WTC11 (cell line): ENCODE measurements at regions of chr9 and their contacts with region 1.

Region 1: DNA sequence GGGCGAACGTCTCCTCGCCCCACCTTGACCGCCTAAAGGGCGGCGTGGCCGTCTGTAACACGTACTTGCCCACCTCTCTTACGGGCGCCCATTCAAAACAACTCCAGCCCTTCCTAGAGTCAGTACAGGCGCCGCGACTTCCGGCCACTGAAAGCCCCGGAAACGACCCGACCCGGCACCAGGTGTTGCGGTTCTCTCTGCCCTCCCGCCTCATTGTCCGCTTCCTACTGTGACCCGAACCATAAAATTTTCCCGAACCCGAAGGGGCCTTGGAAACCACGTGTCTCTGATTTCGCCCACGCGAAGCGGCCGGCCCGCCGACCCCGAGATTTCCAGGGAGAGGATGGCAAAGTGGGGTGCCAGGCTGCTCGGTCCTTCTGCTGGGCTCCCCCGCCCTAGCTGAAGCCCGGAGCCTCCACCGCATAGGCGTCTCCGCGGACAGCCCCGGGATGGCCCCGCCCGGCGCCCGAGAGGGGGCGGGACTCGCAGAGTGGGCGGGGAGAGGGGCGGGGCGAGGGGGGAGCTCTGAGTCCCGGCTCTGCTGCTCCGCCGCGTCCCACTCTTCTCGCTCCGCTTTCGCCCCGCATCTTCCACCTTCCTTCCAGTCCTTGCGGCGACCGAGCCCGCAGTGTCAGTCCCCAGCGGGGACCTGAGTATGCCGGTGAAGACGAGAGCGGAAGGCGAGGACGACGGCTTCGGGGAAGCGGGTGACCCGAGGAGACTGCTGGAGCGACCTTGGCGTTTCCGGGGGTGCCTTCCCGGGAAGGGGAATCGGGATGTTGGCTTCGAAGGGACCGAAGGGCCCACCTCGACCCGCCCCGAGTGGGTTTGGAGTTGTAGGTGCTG is 684 bp upstream of the PTGES2 start:
- DNase-seq: peak; percentile 80
- ATAC-seq: peak; percentile 80
- H3K4me3 Mint-ChIP-seq: peak overlapping the region; percentile 94
- H3K27ac Mint-ChIP-seq: peak overlapping the region; percentile 97
- H3K4me1 Mint-ChIP-seq: peaks cover 17% of the 10 kb centered on the region
- H3K27me3 Mint-ChIP-seq: peaks cover 19% of the 10 kb centered on the region
- CTCF ChIP-seq: no peak

Region 2: GRCh38 chr9:127785023-127785932 is 342.9 kb before region 1 on chr9:
- CTCF ChIA-PET with region 1: no interaction called
- POLR2A ChIA-PET with region 1: no interaction called
- DNase-seq: peak; percentile 90
- ATAC-seq: peak; percentile 34
- H3K4me3 Mint-ChIP-seq: peak overlapping the region; percentile 97
- H3K27ac Mint-ChIP-seq: no peak overlapping the region
- H3K4me1 Mint-ChIP-seq: peaks cover 20% of the 10 kb centered on the region
- H3K27me3 Mint-ChIP-seq: no peaks in the 10 kb centered on the region
- CTCF ChIP-seq: peak; percentile 95

Region 3: GRCh38 chr9:128145536-128145935 is 17.3 kb after region 1 on chr9:
- CTCF ChIA-PET with region 1: interaction called, 44 read pairs
- POLR2A ChIA-PET with region 1: no interaction called
- DNase-seq: no peak
- ATAC-seq: no peak
- H3K4me3 Mint-ChIP-seq: no peak overlapping the region
- H3K27ac Mint-ChIP-seq: 0 out of 2 replicates have a peak overlapping the region, but pooled peaks have one; percentile 65
- H3K4me1 Mint-ChIP-seq: peaks cover 6% of the 10 kb centered on the region
- H3K27me3 Mint-ChIP-seq: no peaks in the 10 kb centered on the region
- CTCF ChIP-seq: no peak

Region 4: GRCh38 chr9:128159784-128160602 is 31.8 kb after region 1 on chr9 and contains the start of gene BBLN:
- CTCF ChIA-PET with region 1: interaction called, 30 read pairs
- POLR2A ChIA-PET with region 1: interaction called, 6 read pairs
- DNase-seq: peak; percentile 98
- ATAC-seq: peak; percentile 95
- H3K4me3 Mint-ChIP-seq: peak within 1 kb of the TSS; percentile 74
- H3K27ac Mint-ChIP-seq: peak within 1 kb of the TSS; percentile 76
- H3K4me1 Mint-ChIP-seq: peaks cover 5% of the 10 kb centered on the region
- H3K27me3 Mint-ChIP-seq: no peaks in the 10 kb centered on the region
- CTCF ChIP-seq: no peak
- total RNA-seq, gene BBLN: 77.1 to 86.9 TPM (median 86.6 TPM) in 3 replicates

Region 5: GRCh38 chr9:128203024-128203706 is 75.0 kb after region 1 on chr9 and contains the start of gene DNM1:
- CTCF ChIA-PET with region 1: interaction called, 13 read pairs
- POLR2A ChIA-PET with region 1: interaction called, 4 read pairs
- DNase-seq: peak; percentile 73
- ATAC-seq: peak; percentile 74
- H3K4me3 Mint-ChIP-seq: peak within 1 kb of the TSS; percentile 76
- H3K27ac Mint-ChIP-seq: peak within 1 kb of the TSS; percentile 3; the same call in 1 of the 2 replicates
- H3K4me1 Mint-ChIP-seq: peaks cover 24% of the 10 kb centered on the region
- H3K27me3 Mint-ChIP-seq: no peaks in the 10 kb centered on the region
- CTCF ChIP-seq: peak; percentile 94
- total RNA-seq, gene DNM1: 79.0 to 105 TPM (median 92.4 TPM) in 3 replicates

Region 6: GRCh38 chr9:128338852-128339770 is 210.9 kb after region 1 on chr9:
- CTCF ChIA-PET with region 1: no interaction called
- POLR2A ChIA-PET with region 1: no interaction called
- DNase-seq: no peak
- ATAC-seq: no peak
- H3K4me3 Mint-ChIP-seq: peak overlapping the region; percentile 87
- H3K27ac Mint-ChIP-seq: no peak overlapping the region
- H3K4me1 Mint-ChIP-seq: peaks cover 5% of the 10 kb centered on the region; the same call in 1 of the 2 replicates
- H3K27me3 Mint-ChIP-seq: no peaks in the 10 kb centered on the region
- CTCF ChIP-seq: no peak